ENCODE measurements at regions of chr12 and their contacts with region 1.

Region 1: GRCh38 chr12:11877869-11878780 is 192.6 kb upstream of the BCL2L14 start:
- DNase-seq: no peak
- ATAC-seq: no peak
- H3K4me3 ChIP-seq: no peak overlapping the region
- H3K27ac ChIP-seq: no peak overlapping the region
- H3K4me1 ChIP-seq: peaks cover 12 to 23% of the 10 kb centered on the region in 2 donors
- H3K27me3 ChIP-seq: no peaks in the 10 kb centered on the region
- CTCF ChIP-seq: no peak
- POLR2A ChIP-seq: no peak

Region 2: GRCh38 chr12:11891754-11892386 is 13.7 kb after region 1 on chr12:
- in situ Hi-C with region 1: no loop called
- intact Hi-C with region 1: no loop called
- DNase-seq: no peak
- ATAC-seq: no peak
- H3K4me3 ChIP-seq: no peak overlapping the region
- H3K27ac ChIP-seq: no peak overlapping the region
- H3K4me1 ChIP-seq: no peaks in the 10 kb centered on the region
- H3K27me3 ChIP-seq: no peaks in the 10 kb centered on the region
- CTCF ChIP-seq: peak in 3 of 5 experiments; percentile 23 to 49 (median 48)
- POLR2A ChIP-seq: no peak

Region 3: DNA sequence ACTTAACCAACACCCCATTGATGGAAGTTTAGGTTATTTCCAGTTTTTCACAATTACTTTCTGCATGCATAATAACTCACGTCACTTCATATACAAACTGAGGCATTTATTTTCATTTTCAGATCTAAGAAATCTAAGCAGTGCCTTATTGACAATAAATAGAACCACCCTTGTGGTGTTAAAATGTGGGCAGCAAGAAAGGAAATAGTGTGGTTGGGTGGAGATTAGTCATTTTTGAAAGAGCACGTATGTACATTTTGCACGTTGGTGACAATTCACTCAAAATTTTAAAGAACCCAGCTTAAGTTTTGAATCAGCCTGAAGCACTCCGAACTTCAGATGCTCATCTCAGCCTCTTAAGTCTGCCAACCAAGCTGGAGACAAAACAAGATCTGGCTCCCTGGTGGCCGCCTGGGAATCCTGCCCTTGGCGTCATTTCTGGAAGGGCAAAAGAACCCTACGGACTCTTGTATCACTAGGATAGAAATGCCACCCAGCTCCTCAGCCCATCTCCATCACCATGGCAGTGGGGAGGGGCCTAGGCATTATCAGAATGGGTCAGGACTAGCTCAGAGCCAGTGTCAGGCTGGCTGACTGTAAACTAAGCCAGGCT is 103.1 kb after region 1 on chr12:
- in situ Hi-C with region 1: loop called in 1 of 4 experiments (anchors 25 kb)
- intact Hi-C with region 1: no loop called
- DNase-seq: no peak
- ATAC-seq: no peak
- H3K4me3 ChIP-seq: no peak overlapping the region
- H3K27ac ChIP-seq: no peak overlapping the region
- H3K4me1 ChIP-seq: peaks cover 0 to 6% of the 10 kb centered on the region in 2 donors
- H3K27me3 ChIP-seq: no peaks in the 10 kb centered on the region
- CTCF ChIP-seq: no peak
- POLR2A ChIP-seq: no peak

Region 4: DNA sequence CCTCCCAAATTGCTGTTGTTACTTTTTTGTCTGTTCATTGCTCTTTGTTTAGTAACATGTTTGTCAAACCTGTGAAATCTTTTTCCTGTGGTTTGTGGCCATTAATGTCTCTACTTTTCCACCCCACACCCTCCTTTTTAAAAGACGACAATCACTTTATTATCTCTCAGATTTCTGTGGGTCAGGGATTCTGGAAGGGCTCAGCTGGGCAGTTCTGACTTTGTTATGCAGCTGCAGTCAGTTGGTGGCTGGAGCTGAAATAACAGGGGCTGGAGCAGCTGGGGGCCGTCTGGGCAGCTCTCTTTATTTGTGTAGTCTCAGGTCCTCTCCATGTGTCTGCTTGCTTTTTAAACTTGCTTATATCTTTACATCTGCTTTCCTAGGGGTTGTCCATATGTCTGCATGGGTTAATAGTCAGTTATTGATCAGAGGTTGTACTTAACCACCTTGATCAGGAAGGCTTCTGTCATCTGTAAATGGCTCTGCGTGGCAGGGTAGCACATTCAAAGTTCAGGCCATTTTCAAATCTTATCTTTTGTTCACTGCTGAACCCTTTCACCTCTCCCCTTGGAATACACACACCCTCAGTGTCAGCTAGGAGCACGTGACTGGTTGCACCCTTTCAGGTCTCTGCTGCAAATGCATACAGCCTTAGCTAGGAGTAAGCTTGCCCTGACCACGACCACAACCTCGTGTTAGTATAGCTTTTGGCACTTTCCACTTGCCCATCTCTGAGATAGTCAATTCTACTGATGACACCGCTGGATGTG is 506.6 kb after region 1 on chr12:
- in situ Hi-C with region 1: no loop called
- intact Hi-C with region 1: no loop called
- DNase-seq: no peak
- ATAC-seq: no peak
- H3K4me3 ChIP-seq: no peak overlapping the region
- H3K27ac ChIP-seq: no peak overlapping the region
- H3K4me1 ChIP-seq: peaks cover 0 to 16% of the 10 kb centered on the region in 2 donors
- H3K27me3 ChIP-seq: no peaks in the 10 kb centered on the region
- CTCF ChIP-seq: no peak
- POLR2A ChIP-seq: no peak

Measured in gastrocnemius medialis (tissue), 4 donors.